ENCODE measurements at regions of chr15 and their contacts with region 1.

Region 1: GRCh38 chr15:89358755-89359439 is 24.3 kb upstream of the POLG start:
- DNase-seq: peak; percentile 65
- ATAC-seq: peak; percentile 88
- H3K4me3 ChIP-seq: peak overlapping the region; percentile 44 to 55; a peak in 3 of 4 replicates
- H3K27ac ChIP-seq: no peak overlapping the region
- H3K4me1 ChIP-seq: peaks cover 2% of the 10 kb centered on the region; the same call in 1 of the 2 replicates
- H3K27me3 ChIP-seq: peaks cover 28% of the 10 kb centered on the region
- CTCF ChIP-seq: peak; percentile 99

Region 2: DNA sequence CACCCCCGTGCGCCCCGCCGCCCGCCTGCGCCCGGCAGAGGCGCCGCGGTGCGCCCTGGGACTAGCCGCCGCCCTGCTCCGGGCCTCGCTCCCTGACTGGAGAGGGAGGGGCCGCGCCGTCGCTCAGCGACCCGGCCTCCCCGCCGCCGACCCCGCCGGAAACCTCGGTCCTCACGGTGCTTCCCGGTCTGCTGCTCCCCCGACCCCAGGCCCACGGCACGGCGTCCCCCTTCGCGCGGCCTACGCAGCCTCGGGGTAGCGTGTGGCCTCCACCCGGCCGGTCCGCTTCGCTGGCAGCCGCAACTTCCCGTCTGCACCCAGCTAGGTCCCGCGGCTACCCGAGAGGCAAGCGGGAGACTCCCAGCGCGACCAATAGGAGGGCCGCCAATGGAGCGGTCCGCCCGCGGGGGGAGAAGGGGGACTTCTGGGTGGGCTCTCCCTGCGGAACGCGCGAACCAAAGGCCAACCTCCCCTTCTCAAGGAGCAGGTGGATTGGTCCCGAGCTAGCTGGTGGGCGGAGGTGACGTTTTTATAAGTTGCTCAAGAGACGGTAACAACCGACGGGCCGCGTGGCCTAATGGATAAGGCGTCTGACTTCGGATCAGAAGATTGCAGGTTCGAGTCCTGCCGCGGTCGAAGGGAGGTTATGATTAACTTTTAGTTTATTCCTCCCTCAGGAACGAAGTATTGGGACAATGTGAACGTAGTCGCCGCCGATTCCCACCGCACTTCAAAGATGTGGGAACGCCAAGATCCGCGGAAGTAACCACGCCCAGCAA is 24.2 kb before region 1 on chr15 and contains the start of gene POLG:
- CTCF ChIA-PET with region 1: interaction called, 10 read pairs
- POLR2A ChIA-PET with region 1: no interaction called
- in situ Hi-C with region 1: no loop called
- intact Hi-C with region 1: no loop called
- DNase-seq: peak; percentile 97
- ATAC-seq: peak; percentile 95
- H3K4me3 ChIP-seq: peak within 1 kb of the TSS; percentile 95 to 96
- H3K27ac ChIP-seq: peak within 1 kb of the TSS; percentile 93
- H3K4me1 ChIP-seq: peaks cover 32% of the 10 kb centered on the region
- H3K27me3 ChIP-seq: no peaks in the 10 kb centered on the region
- CTCF ChIP-seq: no peak
- total RNA-seq, gene POLG: 95.2 TPM

Region 3: DNA sequence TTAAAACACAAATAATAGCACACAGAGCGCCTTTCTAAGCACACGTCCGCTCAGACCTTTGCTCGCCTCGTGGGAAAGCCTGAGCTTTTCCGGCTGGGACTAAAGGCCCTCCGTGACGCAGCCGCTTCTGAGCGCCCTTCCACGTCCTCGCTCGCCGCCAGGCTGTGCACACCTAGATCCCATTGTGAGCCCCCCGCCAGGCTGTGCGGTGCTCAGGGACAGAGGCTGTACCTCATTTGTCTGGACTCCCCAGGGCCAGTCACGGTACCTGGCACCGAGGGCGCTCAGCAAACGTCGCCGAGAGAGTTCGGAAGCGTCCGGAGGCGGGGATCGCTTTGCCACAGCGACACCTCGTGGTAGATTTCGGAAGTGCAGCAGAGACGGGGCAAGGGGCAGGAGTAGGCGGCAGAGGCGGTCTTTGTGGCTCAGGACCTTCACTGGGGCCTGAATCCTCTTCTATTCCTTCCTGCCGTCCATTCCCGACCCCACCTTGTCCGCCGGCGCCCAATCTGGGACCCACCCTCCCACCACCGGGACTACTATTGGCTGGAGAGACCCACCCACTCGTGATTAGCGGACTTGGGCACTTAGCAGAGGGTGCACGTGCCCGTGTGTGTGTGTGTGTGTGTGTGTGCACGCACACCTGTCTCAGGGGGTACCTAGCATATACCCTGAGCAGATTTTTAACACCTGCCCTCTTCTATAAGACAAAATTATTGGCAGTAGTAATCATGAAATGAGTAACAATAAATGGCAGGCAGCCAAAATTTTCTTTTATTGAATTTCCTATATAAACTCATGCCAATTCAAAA is 71.8 kb after region 1 on chr15:
- CTCF ChIA-PET with region 1: interaction called, 29 read pairs
- POLR2A ChIA-PET with region 1: no interaction called
- in situ Hi-C with region 1: loop called (anchors 5 kb)
- intact Hi-C with region 1: loop called (anchors 1 kb)
- DNase-seq: peak; percentile 64
- ATAC-seq: peak; percentile 98
- H3K4me3 ChIP-seq: peak overlapping the region; percentile 40 to 60
- H3K27ac ChIP-seq: peak overlapping the region; percentile 35; the same call in 1 of the 2 replicates
- H3K4me1 ChIP-seq: peaks cover 8% of the 10 kb centered on the region; the same call in 1 of the 2 replicates
- H3K27me3 ChIP-seq: no peaks in the 10 kb centered on the region
- CTCF ChIP-seq: peak; percentile 96

Region 4: GRCh38 chr15:89442671-89443307 is 83.9 kb after region 1 on chr15:
- CTCF ChIA-PET with region 1: interaction called, 4 read pairs
- POLR2A ChIA-PET with region 1: interaction called, 10 read pairs
- in situ Hi-C with region 1: loop called (anchors 5 kb)
- intact Hi-C with region 1: no loop called
- DNase-seq: peak; percentile 5
- ATAC-seq: peak; percentile 84
- H3K4me3 ChIP-seq: no peak overlapping the region
- H3K27ac ChIP-seq: no peak overlapping the region
- H3K4me1 ChIP-seq: no peaks in the 10 kb centered on the region
- H3K27me3 ChIP-seq: no peaks in the 10 kb centered on the region
- CTCF ChIP-seq: peak; percentile 92

Region 5: GRCh38 chr15:89472785-89473256 is 113.9 kb after region 1 on chr15:
- CTCF ChIA-PET with region 1: interaction called, 20 read pairs
- POLR2A ChIA-PET with region 1: no interaction called
- in situ Hi-C with region 1: no loop called
- intact Hi-C with region 1: loop called (anchors 2 kb)
- DNase-seq: peak; percentile 36
- ATAC-seq: peak; percentile 93
- H3K4me3 ChIP-seq: no peak overlapping the region
- H3K27ac ChIP-seq: no peak overlapping the region
- H3K4me1 ChIP-seq: no peaks in the 10 kb centered on the region
- H3K27me3 ChIP-seq: no peaks in the 10 kb centered on the region
- CTCF ChIP-seq: peak; percentile 92

Measured in Panc1 (cell line).